ENCODE measurements at regions of chr10 and their contacts with region 1.

Region 1: DNA sequence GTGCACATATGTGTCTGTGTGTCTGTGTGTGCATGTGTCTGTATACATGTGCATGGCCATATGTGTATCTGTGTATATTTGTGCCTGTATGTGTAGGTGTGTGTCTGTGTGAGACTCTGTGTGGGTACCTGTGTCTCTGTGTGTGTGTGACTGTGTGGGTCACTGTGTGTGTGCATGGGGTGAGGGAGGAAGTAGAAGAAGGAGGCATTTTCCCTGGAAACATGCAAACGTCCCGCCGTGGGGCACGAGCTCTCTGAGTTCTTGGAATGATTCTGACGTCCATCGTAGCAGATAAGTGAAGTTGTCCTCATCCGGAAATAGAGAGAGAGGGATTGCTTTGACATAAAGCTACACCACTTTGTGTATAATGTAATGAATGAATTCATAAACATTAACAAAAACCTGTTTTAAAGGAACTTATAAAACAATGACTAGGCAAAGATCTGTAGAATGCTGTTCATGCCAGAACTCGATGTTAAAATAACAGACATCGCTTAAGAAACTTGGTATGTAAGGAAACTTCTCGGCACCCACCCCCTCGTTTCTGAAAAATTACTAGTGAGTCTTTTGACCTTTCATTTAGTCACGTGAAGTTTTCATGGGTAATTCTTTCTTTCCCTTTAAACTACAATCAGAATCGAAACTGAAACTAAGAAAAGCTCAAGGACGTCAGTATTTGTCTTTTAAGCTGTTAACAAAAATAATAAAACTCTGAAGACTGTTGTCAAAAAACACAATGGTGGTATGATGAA is 43.6 kb upstream of the KLF6 start:
- DNase-seq: peak; percentile 84
- H3K4me3 ChIP-seq: peak overlapping the region; percentile 18 to 55 (median 27)
- H3K27ac ChIP-seq: peak overlapping the region; percentile 74
- H3K4me1 ChIP-seq: peaks cover 8% of the 10 kb centered on the region
- H3K27me3 ChIP-seq: no peaks in the 10 kb centered on the region
- CTCF ChIP-seq: no peak
- POLR2A ChIP-seq: no peak

Region 2: GRCh38 chr10:3811291-3811870 is 17.2 kb before region 1 on chr10:
- CTCF ChIA-PET with region 1: interaction called, 6 read pairs
- POLR2A ChIA-PET with region 1: no interaction called
- dilution Hi-C with region 1: no loop called
- intact Hi-C with region 1: loop called (anchors 1 kb)
- DNase-seq: peak; percentile 70
- H3K4me3 ChIP-seq: no peak overlapping the region
- H3K27ac ChIP-seq: peak overlapping the region; percentile 100
- H3K4me1 ChIP-seq: peaks cover 55% of the 10 kb centered on the region
- H3K27me3 ChIP-seq: no peaks in the 10 kb centered on the region
- CTCF ChIP-seq: no peak
- POLR2A ChIP-seq: peak; percentile 28

Region 3: GRCh38 chr10:4162571-4163286 is 334.1 kb after region 1 on chr10:
- CTCF ChIA-PET with region 1: no interaction called
- POLR2A ChIA-PET with region 1: no interaction called
- dilution Hi-C with region 1: no loop called
- intact Hi-C with region 1: no loop called
- DNase-seq: no peak
- H3K4me3 ChIP-seq: no peak overlapping the region
- H3K27ac ChIP-seq: no peak overlapping the region
- H3K4me1 ChIP-seq: no peaks in the 10 kb centered on the region
- H3K27me3 ChIP-seq: no peaks in the 10 kb centered on the region
- CTCF ChIP-seq: no peak
- POLR2A ChIP-seq: no peak

Measured in endothelial cell of umbilical vein (primary cell).